ENCODE measurements at regions of chr14 and their contacts with region 1.

Region 1: GRCh38 chr14:71103662-71104484 is 196.6 kb downstream of the PCNX1 start:
- DNase-seq: peak; percentile 41 to 59 (median 48)
- H3K4me3 ChIP-seq: no peak overlapping the region
- H3K4me3 Mint-ChIP-seq: no peak overlapping the region
- H3K27ac ChIP-seq: no peak overlapping the region
- H3K27ac Mint-ChIP-seq: no peak overlapping the region
- H3K4me1 ChIP-seq: no peaks in the 10 kb centered on the region
- H3K4me1 Mint-ChIP-seq: no peaks in the 10 kb centered on the region
- H3K27me3 ChIP-seq: no peaks in the 10 kb centered on the region
- H3K27me3 Mint-ChIP-seq: peaks cover 0 to 4% (median 0%) of the 10 kb centered on the region in 3 donors
- CTCF ChIP-seq: peak; percentile 86

Region 2: GRCh38 chr14:71142336-71143038 is 38.6 kb after region 1 on chr14:
- intact Hi-C with region 1: no loop called
- DNase-seq: peak; percentile 17 to 62 (median 53)
- H3K4me3 ChIP-seq: peak overlapping the region in 1 of 3 experiments; percentile 20
- H3K4me3 Mint-ChIP-seq: peak overlapping the region in 1 of 2 donors; percentile 69
- H3K27ac ChIP-seq: peak overlapping the region; percentile 37 to 79
- H3K27ac Mint-ChIP-seq: peak overlapping the region; percentile 82 to 92 (median 89)
- H3K4me1 ChIP-seq: peaks cover 66 to 77% of the 10 kb centered on the region in 2 donors
- H3K4me1 Mint-ChIP-seq: peaks cover 67% of the 10 kb centered on the region
- H3K27me3 ChIP-seq: no peaks in the 10 kb centered on the region
- H3K27me3 Mint-ChIP-seq: peaks cover 0 to 3% (median 2%) of the 10 kb centered on the region in 3 donors
- CTCF ChIP-seq: no peak

Region 3: GRCh38 chr14:71753126-71753830 is 649.4 kb after region 1 on chr14:
- intact Hi-C with region 1: loop called (anchors 2 to 10 kb)
- DNase-seq: peak; percentile 39 to 58 (median 56)
- H3K4me3 ChIP-seq: no peak overlapping the region
- H3K4me3 Mint-ChIP-seq: peak overlapping the region in 1 of 2 donors; percentile 49
- H3K27ac ChIP-seq: no peak overlapping the region
- H3K27ac Mint-ChIP-seq: no peak overlapping the region
- H3K4me1 ChIP-seq: peaks cover 0 to 3% of the 10 kb centered on the region in 2 donors
- H3K4me1 Mint-ChIP-seq: peaks cover 17% of the 10 kb centered on the region
- H3K27me3 ChIP-seq: no peaks in the 10 kb centered on the region
- H3K27me3 Mint-ChIP-seq: peaks cover 0 to 4% (median 4%) of the 10 kb centered on the region in 3 donors
- CTCF ChIP-seq: peak; percentile 87